ENCODE measurements at regions of chr20 and their contacts with region 1.

Region 1: DNA sequence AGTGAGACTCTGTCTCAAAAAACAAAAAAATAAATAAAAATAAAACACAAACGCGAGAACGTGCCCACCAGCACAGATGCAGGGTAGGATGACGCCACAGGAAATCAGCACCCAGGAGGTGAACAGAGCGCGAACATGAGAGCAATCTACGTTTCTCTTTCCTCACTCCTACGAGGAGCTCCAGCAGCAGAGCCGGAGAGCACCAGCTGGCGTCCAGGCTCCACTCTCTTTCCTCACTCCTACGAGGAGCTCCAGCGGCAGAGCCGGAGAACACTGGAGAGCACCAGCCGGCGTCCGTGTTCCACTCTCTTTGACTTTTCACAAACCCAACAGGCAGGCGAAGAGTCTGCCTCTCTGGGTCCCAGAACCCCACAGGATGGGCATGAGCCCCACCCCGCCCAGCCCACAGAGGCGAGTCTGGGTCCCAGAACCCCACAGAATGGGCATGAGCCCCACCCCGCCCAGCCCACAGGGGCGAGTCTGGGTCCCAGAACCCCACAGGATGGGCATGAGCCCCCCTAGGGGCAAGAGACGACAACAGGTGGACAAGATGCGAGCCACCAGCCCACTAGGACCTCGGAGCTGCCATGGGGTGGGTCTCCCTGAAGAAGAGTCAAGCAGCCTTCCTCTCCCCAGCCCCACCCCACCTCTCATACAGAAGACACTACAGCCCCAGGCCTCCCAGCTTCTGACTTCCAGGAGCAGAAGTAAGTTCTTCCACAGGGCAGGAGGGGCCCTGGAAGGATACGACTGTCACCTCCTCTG is 20.2 kb downstream of the ZBTB46 start:
- DNase-seq: no peak
- H3K4me3 ChIP-seq: no peak overlapping the region
- H3K27ac ChIP-seq: no peak overlapping the region
- H3K4me1 ChIP-seq: no peaks in the 10 kb centered on the region
- H3K27me3 ChIP-seq: no peaks in the 10 kb centered on the region
- CTCF ChIP-seq: no peak

Region 2: DNA sequence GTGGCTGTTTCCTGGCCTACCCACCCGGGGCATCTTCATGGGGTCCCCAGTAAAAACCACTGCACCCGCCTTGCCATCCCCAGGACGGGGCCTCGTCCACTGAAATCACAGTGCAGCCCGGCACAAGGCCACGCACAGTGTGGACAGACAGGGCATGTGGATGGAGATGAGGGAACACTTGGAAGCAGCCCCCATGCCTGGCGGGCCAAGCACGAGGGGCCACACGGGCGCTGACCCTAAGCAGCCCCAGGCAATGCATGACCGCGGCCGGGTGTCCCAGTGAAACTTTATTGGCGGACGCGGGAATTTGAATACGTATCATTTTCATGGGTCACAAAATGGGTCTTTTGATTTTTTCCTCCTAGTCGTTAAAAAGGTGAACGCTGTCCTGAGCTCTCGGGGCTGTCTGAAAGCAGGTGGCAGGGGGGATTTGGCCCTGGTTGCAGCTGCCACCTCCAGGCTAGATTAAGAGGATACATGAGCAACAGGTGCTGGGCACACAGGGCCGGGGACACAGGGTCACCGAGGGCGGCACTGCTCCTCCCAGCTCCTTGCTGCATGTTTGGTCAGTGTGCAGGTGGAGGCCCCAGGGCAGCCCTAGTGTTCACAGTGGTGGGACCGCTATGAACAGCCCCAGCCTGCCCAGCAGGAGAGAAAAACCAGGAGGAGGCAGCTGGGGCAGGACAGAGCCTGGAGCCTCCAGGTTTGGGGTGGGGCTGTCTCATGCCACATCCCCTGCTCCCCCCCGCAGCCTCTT is 1243.5 kb before region 1 on chr20:
- CTCF ChIA-PET with region 1: interaction called, 12 read pairs
- POLR2A ChIA-PET with region 1: no interaction called
- intact Hi-C with region 1: no loop called
- DNase-seq: no peak
- H3K4me3 ChIP-seq: no peak overlapping the region
- H3K27ac ChIP-seq: no peak overlapping the region
- H3K4me1 ChIP-seq: no peaks in the 10 kb centered on the region
- H3K27me3 ChIP-seq: peaks cover 93% of the 10 kb centered on the region
- CTCF ChIP-seq: no peak

Region 3: GRCh38 chr20:63854069-63854765 is 43.3 kb after region 1 on chr20:
- CTCF ChIA-PET with region 1: no interaction called
- POLR2A ChIA-PET with region 1: interaction called, 25 read pairs
- intact Hi-C with region 1: no loop called
- DNase-seq: no peak
- H3K4me3 ChIP-seq: no peak overlapping the region
- H3K27ac ChIP-seq: no peak overlapping the region
- H3K4me1 ChIP-seq: peaks cover 10% of the 10 kb centered on the region
- H3K27me3 ChIP-seq: no peaks in the 10 kb centered on the region
- CTCF ChIP-seq: no peak

Region 4: DNA sequence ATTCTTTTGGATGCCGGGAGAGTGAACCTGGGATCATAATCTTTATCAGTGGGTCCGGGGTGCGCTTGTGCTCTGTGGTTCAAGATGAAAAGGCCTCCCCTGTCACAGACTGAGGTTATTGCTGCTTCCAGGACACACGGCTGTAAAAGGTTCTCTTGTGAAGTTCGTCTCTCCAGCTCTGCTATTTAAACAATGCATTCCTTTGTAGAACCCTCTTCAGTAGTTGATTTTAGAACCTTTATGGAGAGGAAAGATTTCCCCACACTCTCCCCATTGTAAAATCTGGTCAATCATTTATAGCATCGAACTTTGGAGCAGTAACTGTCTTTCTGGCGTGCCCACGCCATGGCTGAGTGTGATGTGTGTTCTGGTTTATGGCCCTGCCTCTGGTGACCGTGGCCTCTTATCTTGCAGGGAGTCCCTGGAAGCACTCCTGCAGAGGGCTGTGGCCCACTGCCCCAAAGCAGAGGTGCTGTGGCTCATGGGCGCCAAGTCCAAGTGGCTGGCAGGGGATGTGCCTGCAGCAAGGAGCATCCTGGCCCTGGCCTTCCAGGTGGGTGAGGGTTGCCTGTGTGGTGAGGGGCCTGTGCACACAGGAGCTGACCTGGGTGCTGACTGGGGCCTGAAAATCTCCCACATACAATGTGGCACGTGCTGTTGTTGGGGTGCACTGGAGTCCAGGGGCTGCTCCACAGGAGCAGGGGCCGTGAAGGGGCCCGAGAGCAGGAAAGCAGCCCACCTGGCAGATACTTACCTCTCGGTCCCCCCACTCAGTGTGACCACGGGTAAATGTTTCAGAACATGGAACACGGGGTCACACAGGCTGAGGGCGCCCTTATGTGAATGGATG is 213.5 kb after region 1 on chr20:
- CTCF ChIA-PET with region 1: no interaction called
- POLR2A ChIA-PET with region 1: no interaction called
- intact Hi-C with region 1: no loop called
- DNase-seq: no peak
- H3K4me3 ChIP-seq: no peak overlapping the region
- H3K27ac ChIP-seq: no peak overlapping the region
- H3K4me1 ChIP-seq: no peaks in the 10 kb centered on the region
- H3K27me3 ChIP-seq: no peaks in the 10 kb centered on the region
- CTCF ChIP-seq: no peak

Measured in PC-9 (cell line).